CD8-positive, alpha-beta T cell (primary cell): ENCODE measurements at regions of chr11 and their contacts with region 1.

Region 1: GRCh38 chr11:32062540-32062939 is 28.3 kb upstream of the RCN1 start:
- DNase-seq: no peak
- ATAC-seq: no peak
- H3K4me3 ChIP-seq: no peak overlapping the region
- H3K4me3 Mint-ChIP-seq: no peak overlapping the region
- H3K27ac ChIP-seq: no peak overlapping the region
- H3K27ac Mint-ChIP-seq: no peak overlapping the region
- H3K4me1 ChIP-seq: no peaks in the 10 kb centered on the region
- H3K4me1 Mint-ChIP-seq: no peaks in the 10 kb centered on the region
- H3K27me3 ChIP-seq: no peaks in the 10 kb centered on the region
- H3K27me3 Mint-ChIP-seq: peaks cover 22% of the 10 kb centered on the region
- CTCF ChIP-seq: no peak

Region 2: GRCh38 chr11:31921081-31921480 is 141.5 kb before region 1 on chr11:
- CTCF ChIA-PET with region 1: no interaction called
- POLR2A ChIA-PET with region 1: no interaction called
- intact Hi-C with region 1: no loop called
- DNase-seq: no peak
- ATAC-seq: no peak
- H3K4me3 ChIP-seq: no peak overlapping the region
- H3K4me3 Mint-ChIP-seq: no peak overlapping the region
- H3K27ac ChIP-seq: no peak overlapping the region
- H3K27ac Mint-ChIP-seq: no peak overlapping the region
- H3K4me1 ChIP-seq: no peaks in the 10 kb centered on the region
- H3K4me1 Mint-ChIP-seq: no peaks in the 10 kb centered on the region
- H3K27me3 ChIP-seq: peaks cover 0 to 2% of the 10 kb centered on the region in 2 experiments
- H3K27me3 Mint-ChIP-seq: peaks cover 23% of the 10 kb centered on the region
- CTCF ChIP-seq: no peak

Region 3: DNA sequence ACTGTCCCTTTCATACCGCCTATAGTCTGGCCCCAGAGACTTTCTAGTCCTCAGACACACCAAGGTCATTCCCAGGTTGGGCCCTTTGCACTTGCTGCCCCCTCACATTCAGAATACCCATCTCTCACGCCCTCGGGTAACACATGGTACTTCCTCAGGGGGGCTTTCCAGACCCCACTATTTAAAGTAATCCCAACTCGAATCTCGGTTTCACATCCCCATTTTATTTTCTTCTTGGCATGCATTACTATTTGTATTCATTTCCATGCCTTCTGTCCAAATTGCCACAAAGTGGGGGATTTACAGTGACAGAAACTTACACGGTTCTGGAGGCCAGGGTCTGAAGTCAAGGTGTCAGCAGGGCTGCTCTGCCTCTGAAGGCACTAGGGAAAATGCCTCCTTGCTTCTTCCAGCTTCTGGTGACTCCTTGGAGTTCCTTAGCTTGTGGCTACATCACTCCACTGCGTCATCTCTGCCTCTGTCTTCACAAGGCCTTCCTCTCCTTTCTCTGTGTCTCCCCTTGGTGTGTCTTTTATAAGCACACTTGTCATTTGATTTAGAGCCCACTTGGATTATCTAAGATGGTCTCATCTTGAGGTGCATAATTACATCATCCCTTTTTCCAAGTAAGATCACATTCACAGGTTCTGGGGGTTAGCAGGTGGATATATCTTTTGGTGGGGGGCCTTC is 43.5 kb after region 1 on chr11:
- CTCF ChIA-PET with region 1: no interaction called
- POLR2A ChIA-PET with region 1: no interaction called
- intact Hi-C with region 1: loop called in 1 of 2 experiments (anchors 5 kb)
- DNase-seq: no peak
- ATAC-seq: no peak
- H3K4me3 ChIP-seq: no peak overlapping the region
- H3K4me3 Mint-ChIP-seq: no peak overlapping the region
- H3K27ac ChIP-seq: no peak overlapping the region
- H3K27ac Mint-ChIP-seq: no peak overlapping the region
- H3K4me1 ChIP-seq: no peaks in the 10 kb centered on the region
- H3K4me1 Mint-ChIP-seq: no peaks in the 10 kb centered on the region
- H3K27me3 ChIP-seq: no peaks in the 10 kb centered on the region
- H3K27me3 Mint-ChIP-seq: peaks cover 4% of the 10 kb centered on the region
- CTCF ChIP-seq: no peak